ENCODE measurements at regions of chr3 and their contacts with region 1.

Region 1: DNA sequence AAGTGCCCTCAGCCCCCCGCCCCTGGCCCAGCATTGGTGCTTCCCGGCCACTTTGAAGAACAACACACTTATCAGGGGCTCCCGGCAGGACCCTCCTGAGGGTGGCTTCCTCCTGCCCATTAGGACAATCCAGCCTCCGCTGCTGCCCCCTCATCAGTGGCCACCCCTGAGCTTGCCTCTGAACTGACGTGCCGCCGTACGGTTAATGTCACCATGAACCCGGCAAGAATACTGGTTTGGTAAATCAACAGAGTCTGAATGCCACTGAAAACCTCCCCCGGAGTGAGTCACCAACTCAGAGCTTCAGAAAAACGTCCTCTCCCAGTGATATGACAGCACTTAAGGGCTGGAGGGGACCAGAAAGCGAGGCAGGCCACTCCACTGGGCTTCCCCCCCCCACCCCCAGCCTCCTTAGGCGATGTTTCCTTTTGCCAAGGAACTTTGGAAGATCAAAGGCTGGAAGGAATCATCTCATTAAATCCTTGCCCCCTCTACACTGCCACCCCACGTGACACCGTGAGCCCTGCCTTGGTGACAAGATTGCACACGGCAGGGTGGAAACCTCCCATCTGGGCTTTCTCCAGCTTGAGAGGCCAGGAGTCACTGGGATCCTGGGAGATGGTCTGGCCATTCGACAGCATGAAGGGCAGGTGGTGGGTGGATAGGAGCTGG is 142.1 kb downstream of the NUP210 start:
- DNase-seq: no peak
- ATAC-seq: peak in 1 of 4 donors; percentile 11
- H3K4me3 ChIP-seq: peak overlapping the region in 1 of 12 donors; percentile 13
- H3K27ac ChIP-seq: peak overlapping the region; percentile 4 to 84 (median 62)
- H3K4me1 ChIP-seq: peaks cover 0 to 30% (median 8%) of the 10 kb centered on the region in 12 donors
- H3K27me3 ChIP-seq: peaks cover 0 to 21% (median 4%) of the 10 kb centered on the region in 9 donors
- CTCF ChIP-seq: no peak
- POLR2A ChIP-seq: no peak

Region 2: DNA sequence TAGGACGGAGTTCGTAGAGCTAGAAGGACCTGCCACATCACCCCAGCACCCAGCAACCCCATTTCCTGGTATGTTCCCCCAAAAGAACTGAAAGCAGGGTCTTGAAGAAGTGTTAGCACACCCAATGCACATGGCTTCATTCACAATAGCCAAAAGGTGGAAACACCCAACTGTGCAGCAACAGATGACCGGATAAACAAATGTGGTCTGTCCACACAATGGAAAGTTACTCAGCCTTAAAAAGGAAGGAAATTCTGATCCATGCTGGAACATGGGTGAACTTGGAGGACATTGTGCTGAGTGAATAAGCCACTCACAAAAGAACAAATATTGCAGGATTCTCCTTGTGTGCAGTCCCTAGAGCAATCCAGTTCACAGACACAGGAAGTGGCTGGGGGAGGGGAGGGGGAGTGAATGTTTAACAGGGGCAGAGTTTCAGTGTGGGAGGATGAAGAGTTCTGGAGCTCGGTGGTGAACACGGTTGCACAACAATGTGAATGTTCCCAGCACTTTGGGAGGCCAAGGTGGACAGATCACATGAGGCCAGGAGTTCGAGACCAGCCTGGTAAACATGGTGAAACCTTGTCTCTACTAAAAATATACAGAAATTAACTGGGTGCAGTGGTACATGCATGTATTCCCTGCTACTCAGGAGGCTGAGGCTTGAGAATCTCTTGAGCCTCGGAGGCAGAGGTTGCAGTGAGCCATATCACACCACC is 15.3 kb before region 1 on chr3:
- intact Hi-C with region 1: loop called in 1 of 10 experiments (anchors 2 kb)
- DNase-seq: peak in 3 of 5 donors; percentile 41 to 70 (median 45)
- ATAC-seq: peak; percentile 28 to 74 (median 74)
- H3K4me3 ChIP-seq: no peak overlapping the region
- H3K27ac ChIP-seq: peak overlapping the region in 8 of 12 donors; percentile 24 to 82 (median 56)
- H3K4me1 ChIP-seq: peaks cover 0 to 50% (median 10%) of the 10 kb centered on the region in 12 donors
- H3K27me3 ChIP-seq: no peaks in the 10 kb centered on the region
- CTCF ChIP-seq: no peak
- POLR2A ChIP-seq: no peak

Measured in heart left ventricle (tissue), 16 donors.